Activated T-helper 1 cell treated with anti-CD3 and anti-CD28 coated beads, Interleukin-12 subunit alpha, Interleukin-12 subunit beta, Interleukin-2, Interleukin-4 antibody, amounts not matched to agents 30 ng/mL and 10 ng/mL and 1 ng/mL, durations not matched to agents 14 hours and 24 hours and 36 hours (primary cell): ENCODE measurements at regions of chr16 and their contacts with region 1.

Region 1: GRCh38 chr16:67183627-67184328 is at the start of gene MATCAP1:
- DNase-seq: peak; percentile 94
- H3K4me3 Mint-ChIP-seq: peak within 1 kb of the TSS; percentile 62
- H3K27ac Mint-ChIP-seq: no peak within 1 kb of the TSS
- H3K4me1 Mint-ChIP-seq: peaks cover 20% of the 10 kb centered on the region
- H3K27me3 Mint-ChIP-seq: peaks cover 8% of the 10 kb centered on the region
- total RNA-seq, gene MATCAP1: 45.5 and 48.2 TPM in 2 replicates

Region 2: GRCh38 chr16:66934153-66934838 is 249.5 kb before region 1 on chr16 and contains the start of gene CIAO2B:
- intact Hi-C with region 1: no loop called
- DNase-seq: peak; percentile 88
- H3K4me3 Mint-ChIP-seq: peak within 1 kb of the TSS; percentile 96
- H3K27ac Mint-ChIP-seq: peak within 1 kb of the TSS; percentile 87
- H3K4me1 Mint-ChIP-seq: peaks cover 53% of the 10 kb centered on the region
- H3K27me3 Mint-ChIP-seq: no peaks in the 10 kb centered on the region
- total RNA-seq, gene CIAO2B: 162 and 164 TPM in 2 replicates

Region 3: DNA sequence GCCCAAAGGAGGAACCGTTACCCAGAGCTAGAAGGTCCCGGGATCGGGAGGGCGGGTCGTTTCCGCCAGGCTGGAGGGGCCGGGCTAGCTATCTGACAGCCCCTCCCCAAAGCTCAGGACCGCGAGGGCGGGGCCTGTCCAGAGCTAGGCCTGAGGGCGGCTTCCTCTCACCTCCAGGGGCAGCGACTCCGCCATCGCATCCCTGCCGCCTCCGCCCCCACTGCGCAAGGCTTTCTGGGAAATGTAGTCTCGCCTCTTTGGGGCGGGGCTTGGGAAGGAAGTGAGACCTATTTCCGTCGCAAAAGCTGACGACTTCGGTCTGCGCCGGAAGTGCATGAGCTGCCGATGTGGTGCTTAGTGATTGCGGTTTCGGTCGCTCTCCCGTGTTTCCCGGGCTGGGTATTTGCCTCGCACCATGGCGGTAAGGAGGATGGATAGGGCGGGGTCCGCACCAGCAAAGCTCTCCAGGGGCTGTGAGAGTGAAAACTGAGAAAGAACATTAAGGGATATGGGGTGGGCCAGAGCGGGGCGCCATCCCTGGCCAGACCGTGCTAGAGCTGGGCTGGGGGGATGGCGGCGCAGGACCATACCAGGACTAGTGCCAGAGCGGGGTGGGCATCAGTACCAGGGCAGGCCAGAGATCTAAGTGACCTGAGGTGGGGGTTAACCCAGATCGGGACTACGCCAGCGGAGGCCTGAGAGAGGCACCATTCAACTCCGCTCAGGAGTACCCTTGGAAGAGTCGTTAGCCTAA is 43.2 kb after region 1 on chr16 and contains the start of gene TMEM208:
- intact Hi-C with region 1: loop called (anchors 1 kb)
- DNase-seq: peak; percentile 99
- H3K4me3 Mint-ChIP-seq: peak within 1 kb of the TSS; percentile 98
- H3K27ac Mint-ChIP-seq: peak within 1 kb of the TSS; percentile 94
- H3K4me1 Mint-ChIP-seq: peaks cover 43% of the 10 kb centered on the region
- H3K27me3 Mint-ChIP-seq: no peaks in the 10 kb centered on the region
- total RNA-seq, gene TMEM208: 68.5 and 72.4 TPM in 2 replicates